GM10248 (cell line): ENCODE measurements at regions of chr1 and their contacts with region 1.

Region 1: DNA sequence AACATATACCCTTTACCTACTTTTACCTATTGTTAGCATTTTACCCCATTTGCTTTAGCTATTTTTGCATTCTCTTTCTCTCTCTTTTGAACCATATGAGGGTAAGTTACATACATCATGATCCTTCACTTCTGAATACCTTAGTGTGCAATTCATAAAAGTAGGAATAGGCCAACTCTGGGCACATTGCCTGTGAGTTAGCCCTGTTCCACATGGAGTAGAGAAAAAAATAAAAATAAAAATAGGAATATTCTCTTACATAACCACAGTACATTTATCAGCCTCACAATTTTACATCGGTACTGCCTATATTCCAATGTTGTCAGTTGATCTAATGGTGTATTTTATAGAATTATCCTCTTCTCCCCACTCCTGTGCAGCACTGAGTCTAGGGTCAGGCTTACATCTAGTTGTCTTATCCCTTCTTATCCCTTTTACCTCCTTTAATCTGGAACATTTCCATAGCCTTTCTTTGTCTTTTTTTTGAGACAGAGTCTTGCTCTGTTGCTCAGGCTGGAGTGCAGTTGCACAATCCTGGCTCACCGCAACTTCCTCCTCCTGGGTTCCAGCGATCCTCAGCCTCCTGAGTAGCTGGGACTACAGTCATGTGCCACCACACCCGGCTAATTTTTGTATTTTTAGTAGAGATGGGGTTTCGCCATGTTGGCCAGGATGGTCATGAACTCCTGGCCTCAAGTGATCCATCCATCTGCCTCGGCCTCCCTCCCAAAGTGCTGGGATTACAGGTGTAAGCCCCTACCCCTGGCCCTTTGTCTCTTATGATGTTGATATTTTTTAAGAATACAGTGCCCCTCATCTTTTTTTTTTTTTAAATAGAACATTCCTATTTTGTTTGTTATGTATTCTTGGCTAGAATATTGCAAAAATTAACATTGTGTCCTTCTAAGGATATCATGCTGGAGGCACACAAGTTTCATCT is 11.1 kb upstream of the SLC30A1 start:
- DNase-seq: no peak
- CTCF ChIP-seq: no peak

Region 2: GRCh38 chr1:211541720-211542453 is 48.2 kb before region 1 on chr1:
- CTCF ChIA-PET with region 1: no interaction called
- POLR2A ChIA-PET with region 1: no interaction called
- DNase-seq: peak; percentile 10
- CTCF ChIP-seq: no peak

Region 3: GRCh38 chr1:211578640-211579433 is 11.2 kb before region 1 on chr1 and contains the start of gene SLC30A1:
- CTCF ChIA-PET with region 1: interaction called, 11 read pairs
- POLR2A ChIA-PET with region 1: no interaction called
- DNase-seq: peak; percentile 100
- CTCF ChIP-seq: no peak